GM12878 (cell line): ENCODE measurements at regions of chr2 and their contacts with region 1.

Region 1: GRCh38 chr2:135797497-135798274 is 39.3 kb downstream of the LCT start:
- DNase-seq: peak; percentile 36
- ATAC-seq: peak; percentile 89
- H3K4me3 ChIP-seq: no peak overlapping the region
- H3K27ac ChIP-seq: no peak overlapping the region
- H3K4me1 ChIP-seq: peaks cover 11% of the 10 kb centered on the region
- H3K27me3 ChIP-seq: no peaks in the 10 kb centered on the region
- CTCF ChIP-seq: peak; percentile 94 to 95 (median 94)
- EP300 ChIP-seq: no peak
- POLR2A ChIP-seq: no peak
- RAD21 ChIP-seq: peak; percentile 52

Region 2: GRCh38 chr2:134988994-134989605 is 808.6 kb before region 1 on chr2:
- CTCF ChIA-PET with region 1: interaction called, 13 read pairs
- POLR2A ChIA-PET with region 1: no interaction called
- RAD21 ChIA-PET with region 1: interaction called, 6 read pairs
- SMC1A ChIA-PET with region 1: no interaction called
- in situ Hi-C with region 1: no loop called
- intact Hi-C with region 1: no loop called
- DNase-seq: no peak
- ATAC-seq: peak; percentile 75
- H3K4me3 ChIP-seq: no peak overlapping the region
- H3K27ac ChIP-seq: no peak overlapping the region
- H3K4me1 ChIP-seq: no peaks in the 10 kb centered on the region
- H3K27me3 ChIP-seq: no peaks in the 10 kb centered on the region
- CTCF ChIP-seq: peak; percentile 26 to 47 (median 32); a peak in 5 of 6 replicates
- EP300 ChIP-seq: no peak
- POLR2A ChIP-seq: no peak
- RAD21 ChIP-seq: peak; percentile 59

Region 3: GRCh38 chr2:135124924-135125886 is 672.5 kb before region 1 on chr2:
- CTCF ChIA-PET with region 1: no interaction called
- POLR2A ChIA-PET with region 1: no interaction called
- RAD21 ChIA-PET with region 1: no interaction called
- SMC1A ChIA-PET with region 1: no interaction called
- in situ Hi-C with region 1: no loop called
- intact Hi-C with region 1: no loop called
- DNase-seq: no peak
- ATAC-seq: no peak
- H3K4me3 ChIP-seq: no peak overlapping the region
- H3K27ac ChIP-seq: no peak overlapping the region
- H3K4me1 ChIP-seq: no peaks in the 10 kb centered on the region
- H3K27me3 ChIP-seq: no peaks in the 10 kb centered on the region
- CTCF ChIP-seq: no peak
- EP300 ChIP-seq: no peak
- POLR2A ChIP-seq: no peak
- RAD21 ChIP-seq: no peak

Region 4: DNA sequence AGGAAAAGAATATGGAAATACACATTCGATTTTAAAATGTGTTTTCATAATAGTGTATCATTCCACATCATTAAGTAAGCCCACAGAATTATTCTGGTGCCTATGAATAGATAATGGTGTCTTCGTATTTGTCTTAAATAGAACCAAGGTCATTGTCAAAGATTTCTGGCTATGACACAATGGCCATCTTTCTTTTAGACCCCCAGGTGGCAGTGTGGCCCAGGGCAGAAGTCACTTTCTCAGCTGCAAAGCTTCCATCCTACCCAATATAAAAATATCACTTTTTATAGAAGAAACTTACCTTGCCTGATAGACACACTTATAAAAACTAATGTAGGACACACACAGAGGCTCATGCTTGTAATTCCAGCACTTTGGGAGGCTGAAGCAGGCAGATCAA is 324.1 kb before region 1 on chr2:
- CTCF ChIA-PET with region 1: interaction called, 4 read pairs
- POLR2A ChIA-PET with region 1: no interaction called
- RAD21 ChIA-PET with region 1: no interaction called
- SMC1A ChIA-PET with region 1: interaction called, 6 read pairs
- in situ Hi-C with region 1: no loop called
- intact Hi-C with region 1: loop called (anchors 5 kb)
- DNase-seq: peak; percentile 5
- ATAC-seq: peak; percentile 86
- H3K4me3 ChIP-seq: no peak overlapping the region
- H3K27ac ChIP-seq: no peak overlapping the region
- H3K4me1 ChIP-seq: no peaks in the 10 kb centered on the region
- H3K27me3 ChIP-seq: no peaks in the 10 kb centered on the region
- CTCF ChIP-seq: peak; percentile 52 to 76 (median 62)
- EP300 ChIP-seq: no peak
- POLR2A ChIP-seq: no peak
- RAD21 ChIP-seq: peak; percentile 85

Region 5: DNA sequence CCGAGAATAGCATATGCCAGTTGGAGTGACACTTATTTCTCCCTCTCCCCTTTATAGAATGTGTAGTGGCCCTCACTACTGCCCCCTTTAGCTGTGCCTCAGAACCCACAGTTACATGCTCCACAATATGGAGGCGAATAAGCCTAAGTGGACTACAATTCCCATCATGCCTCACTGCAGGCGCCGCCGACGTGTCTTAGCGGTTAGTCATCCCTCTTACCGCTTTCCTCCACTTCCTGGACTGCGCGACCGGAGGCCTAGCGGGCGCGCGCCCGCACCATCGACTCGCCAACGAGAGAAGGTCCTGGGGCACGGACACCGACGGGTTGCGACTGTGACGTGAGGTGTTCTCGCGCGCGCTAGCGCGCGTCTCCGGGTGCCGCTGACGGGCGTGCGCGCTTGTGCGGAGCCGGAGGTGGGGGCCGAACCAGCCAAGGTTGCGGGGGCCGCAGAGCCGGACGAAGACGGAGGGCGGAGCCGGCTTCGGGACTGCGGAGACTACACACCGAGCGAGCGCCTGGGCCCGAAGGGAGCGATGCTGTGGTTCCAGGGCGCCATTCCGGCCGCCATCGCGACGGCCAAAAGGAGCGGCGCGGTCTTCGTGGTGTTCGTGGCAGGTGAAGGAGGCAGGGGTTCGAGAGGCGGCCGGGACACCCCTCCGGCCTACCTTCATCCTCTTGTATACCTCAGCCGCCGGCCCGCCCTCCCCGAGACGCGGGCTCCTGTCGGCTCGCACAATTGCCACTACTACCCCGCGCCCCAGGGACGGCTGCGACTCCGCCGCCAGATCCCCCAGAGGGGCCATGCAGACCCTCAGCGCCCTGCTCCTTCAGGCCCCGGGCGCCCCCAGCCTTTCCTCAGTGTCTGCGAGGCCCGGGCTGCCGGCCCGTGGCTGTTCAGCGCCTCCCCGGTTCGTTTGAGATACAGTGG is 56.0 kb before region 1 on chr2 and contains the start of gene UBXN4:
- CTCF ChIA-PET with region 1: interaction called, 46 read pairs
- POLR2A ChIA-PET with region 1: interaction called, 5 read pairs
- RAD21 ChIA-PET with region 1: interaction called, 4 read pairs
- SMC1A ChIA-PET with region 1: interaction called, 14 read pairs
- in situ Hi-C with region 1: no loop called
- intact Hi-C with region 1: no loop called
- DNase-seq: peak; percentile 96
- ATAC-seq: peak; percentile 91
- H3K4me3 ChIP-seq: peak within 1 kb of the TSS; percentile 95
- H3K27ac ChIP-seq: peak within 1 kb of the TSS; percentile 74
- H3K4me1 ChIP-seq: 0 out of 2 replicates have a peak, but pooled peaks cover 5% of the 10 kb centered on the region
- H3K27me3 ChIP-seq: no peaks in the 10 kb centered on the region
- CTCF ChIP-seq: peak; percentile 49 to 66 (median 50); a peak in 5 of 6 replicates
- EP300 ChIP-seq: no peak
- POLR2A ChIP-seq: peak; percentile 97
- RAD21 ChIP-seq: no peak
- polyA plus RNA-seq, gene UBXN4: 52.6 to 79.4 TPM

Region 6: GRCh38 chr2:135762022-135762421 is 35.7 kb before region 1 on chr2:
- CTCF ChIA-PET with region 1: interaction called, 14 read pairs
- POLR2A ChIA-PET with region 1: no interaction called
- RAD21 ChIA-PET with region 1: no interaction called
- SMC1A ChIA-PET with region 1: interaction called, 5 read pairs
- in situ Hi-C with region 1: no loop called
- intact Hi-C with region 1: no loop called
- DNase-seq: no peak
- ATAC-seq: no peak
- H3K4me3 ChIP-seq: no peak overlapping the region
- H3K27ac ChIP-seq: no peak overlapping the region
- H3K4me1 ChIP-seq: no peaks in the 10 kb centered on the region
- H3K27me3 ChIP-seq: no peaks in the 10 kb centered on the region
- CTCF ChIP-seq: no peak
- EP300 ChIP-seq: no peak
- POLR2A ChIP-seq: no peak
- RAD21 ChIP-seq: no peak

Region 7: GRCh38 chr2:135785032-135785431 is 12.7 kb before region 1 on chr2:
- CTCF ChIA-PET with region 1: interaction called, 40 read pairs
- POLR2A ChIA-PET with region 1: interaction called, 5 read pairs
- RAD21 ChIA-PET with region 1: interaction called, 3 read pairs
- SMC1A ChIA-PET with region 1: interaction called, 14 read pairs
- in situ Hi-C with region 1: no loop called
- intact Hi-C with region 1: no loop called
- DNase-seq: no peak
- ATAC-seq: peak; percentile 55; the same call in 2 of the 3 replicates
- H3K4me3 ChIP-seq: no peak overlapping the region
- H3K27ac ChIP-seq: no peak overlapping the region
- H3K4me1 ChIP-seq: no peaks in the 10 kb centered on the region
- H3K27me3 ChIP-seq: no peaks in the 10 kb centered on the region
- CTCF ChIP-seq: peak in 2 of 3 experiments; percentile 17 to 35; a peak in 2 of 6 replicates
- EP300 ChIP-seq: no peak
- POLR2A ChIP-seq: no peak
- RAD21 ChIP-seq: no peak

Region 8: DNA sequence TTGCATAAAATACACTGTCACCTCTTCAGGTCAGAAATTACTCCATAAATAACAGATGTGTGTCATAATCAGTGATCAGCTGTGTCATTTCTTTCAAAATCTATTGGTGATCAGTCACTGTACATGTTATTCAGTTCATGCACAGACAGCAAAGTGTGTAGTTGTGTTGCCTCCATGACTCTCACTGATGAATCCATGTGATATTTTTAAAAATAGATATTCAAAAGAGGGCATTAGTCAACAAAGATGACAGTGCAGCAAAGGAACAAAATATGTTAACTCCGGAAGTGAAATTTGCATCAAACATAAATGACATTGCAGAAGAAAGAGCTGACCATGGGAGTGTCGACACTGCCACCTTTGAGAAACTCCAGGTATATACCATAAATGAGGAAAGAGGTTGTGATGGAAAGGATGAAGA is 95.7 kb after region 1 on chr2:
- CTCF ChIA-PET with region 1: interaction called, 11 read pairs
- POLR2A ChIA-PET with region 1: no interaction called
- RAD21 ChIA-PET with region 1: no interaction called
- SMC1A ChIA-PET with region 1: interaction called, 3 read pairs
- in situ Hi-C with region 1: no loop called
- intact Hi-C with region 1: no loop called
- DNase-seq: no peak
- ATAC-seq: no peak
- H3K4me3 ChIP-seq: no peak overlapping the region
- H3K27ac ChIP-seq: no peak overlapping the region
- H3K4me1 ChIP-seq: no peaks in the 10 kb centered on the region
- H3K27me3 ChIP-seq: no peaks in the 10 kb centered on the region
- CTCF ChIP-seq: no peak
- EP300 ChIP-seq: no peak
- POLR2A ChIP-seq: no peak
- RAD21 ChIP-seq: 0 out of 2 replicates have a peak, but pooled peaks have one; percentile 22